Common myeloid progenitor, CD34-positive (primary cell): ENCODE measurements at regions of chr2 and their contacts with region 1.

Region 1: GRCh38 chr2:9813312-9814133 is 29.8 kb upstream of the TAF1B start:
- DNase-seq: peak; percentile 62 to 80 (median 73)
- H3K4me3 ChIP-seq: peak overlapping the region in 1 of 7 experiments; percentile 49
- H3K27ac ChIP-seq: no peak overlapping the region
- H3K4me1 ChIP-seq: peaks cover 0 to 16% (median 14%) of the 10 kb centered on the region in 4 experiments
- H3K27me3 ChIP-seq: peaks cover 0 to 5% (median 0%) of the 10 kb centered on the region in 5 experiments

Region 2: GRCh38 chr2:9720352-9721093 is 93.0 kb before region 1 on chr2:
- CTCF ChIA-PET with region 1: no interaction called
- POLR2A ChIA-PET with region 1: no interaction called
- DNase-seq: no peak
- H3K4me3 ChIP-seq: no peak overlapping the region
- H3K27ac ChIP-seq: no peak overlapping the region
- H3K4me1 ChIP-seq: peaks cover 0 to 3% (median 0%) of the 10 kb centered on the region in 4 experiments
- H3K27me3 ChIP-seq: no peaks in the 10 kb centered on the region

Region 3: GRCh38 chr2:9799665-9800632 is 13.6 kb before region 1 on chr2:
- CTCF ChIA-PET with region 1: interaction called, 48 read pairs
- POLR2A ChIA-PET with region 1: no interaction called
- DNase-seq: peak; percentile 67 to 82 (median 76)
- H3K4me3 ChIP-seq: peak overlapping the region in 6 of 7 experiments; percentile 8 to 62 (median 29)
- H3K27ac ChIP-seq: no peak overlapping the region
- H3K4me1 ChIP-seq: peaks cover 3 to 22% (median 13%) of the 10 kb centered on the region in 4 experiments
- H3K27me3 ChIP-seq: no peaks in the 10 kb centered on the region

Region 4: GRCh38 chr2:9889812-9890261 is 76.3 kb after region 1 on chr2:
- CTCF ChIA-PET with region 1: no interaction called
- POLR2A ChIA-PET with region 1: no interaction called
- DNase-seq: no peak
- H3K4me3 ChIP-seq: no peak overlapping the region
- H3K27ac ChIP-seq: no peak overlapping the region
- H3K4me1 ChIP-seq: peaks cover 0 to 6% (median 0%) of the 10 kb centered on the region in 4 experiments
- H3K27me3 ChIP-seq: no peaks in the 10 kb centered on the region